GM12878 (cell line): ENCODE measurements at regions of chr13 and their contacts with region 1.

Region 1: GRCh38 chr13:80666782-80667552 is 326.0 kb upstream of the SPRY2 start:
- DNase-seq: no peak
- ATAC-seq: no peak
- H3K4me3 ChIP-seq: no peak overlapping the region
- H3K27ac ChIP-seq: no peak overlapping the region
- H3K4me1 ChIP-seq: no peaks in the 10 kb centered on the region
- H3K27me3 ChIP-seq: no peaks in the 10 kb centered on the region
- CTCF ChIP-seq: no peak
- EP300 ChIP-seq: no peak
- POLR2A ChIP-seq: no peak
- RAD21 ChIP-seq: no peak

Region 2: DNA sequence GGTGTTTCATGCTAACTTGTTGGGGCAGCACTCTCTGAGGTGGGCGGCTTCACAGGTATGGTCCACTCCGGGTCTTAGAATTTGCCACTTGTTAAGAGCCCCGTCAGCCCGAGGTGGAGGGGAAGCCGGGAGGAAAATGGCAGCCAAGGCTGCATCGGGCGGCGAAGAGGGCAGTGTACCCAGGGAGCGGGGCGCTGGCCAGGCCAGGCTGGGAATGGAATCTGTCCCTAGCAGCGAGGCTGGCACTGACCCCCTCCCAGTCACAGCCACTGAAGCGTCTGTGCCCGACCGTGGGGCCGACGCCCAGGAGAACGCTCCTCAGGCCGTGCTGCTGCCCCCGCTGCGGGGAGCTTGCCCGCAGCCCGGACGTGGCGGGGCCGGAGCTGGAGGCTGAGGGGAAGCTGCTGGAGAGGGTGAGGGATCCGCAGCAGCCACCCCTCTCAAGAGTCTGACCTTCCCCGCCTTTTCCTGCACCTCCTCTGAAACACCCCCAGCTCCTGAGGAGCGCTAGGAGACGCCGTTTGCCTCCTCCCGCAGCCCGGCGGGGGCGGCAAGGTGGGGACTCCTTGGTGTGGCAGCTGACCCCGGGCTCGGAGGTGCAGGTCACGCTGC is 12.2 kb before region 1 on chr13:
- CTCF ChIA-PET with region 1: interaction called, 3 read pairs
- POLR2A ChIA-PET with region 1: no interaction called
- RAD21 ChIA-PET with region 1: no interaction called
- SMC1A ChIA-PET with region 1: interaction called, 10 read pairs
- in situ Hi-C with region 1: no loop called
- intact Hi-C with region 1: no loop called
- DNase-seq: no peak
- ATAC-seq: no peak
- H3K4me3 ChIP-seq: no peak overlapping the region
- H3K27ac ChIP-seq: no peak overlapping the region
- H3K4me1 ChIP-seq: no peaks in the 10 kb centered on the region
- H3K27me3 ChIP-seq: no peaks in the 10 kb centered on the region
- CTCF ChIP-seq: no peak
- EP300 ChIP-seq: no peak
- POLR2A ChIP-seq: no peak
- RAD21 ChIP-seq: no peak